GM18951 (cell line): ENCODE measurements at regions of chr15 and their contacts with region 1.

Region 1: DNA sequence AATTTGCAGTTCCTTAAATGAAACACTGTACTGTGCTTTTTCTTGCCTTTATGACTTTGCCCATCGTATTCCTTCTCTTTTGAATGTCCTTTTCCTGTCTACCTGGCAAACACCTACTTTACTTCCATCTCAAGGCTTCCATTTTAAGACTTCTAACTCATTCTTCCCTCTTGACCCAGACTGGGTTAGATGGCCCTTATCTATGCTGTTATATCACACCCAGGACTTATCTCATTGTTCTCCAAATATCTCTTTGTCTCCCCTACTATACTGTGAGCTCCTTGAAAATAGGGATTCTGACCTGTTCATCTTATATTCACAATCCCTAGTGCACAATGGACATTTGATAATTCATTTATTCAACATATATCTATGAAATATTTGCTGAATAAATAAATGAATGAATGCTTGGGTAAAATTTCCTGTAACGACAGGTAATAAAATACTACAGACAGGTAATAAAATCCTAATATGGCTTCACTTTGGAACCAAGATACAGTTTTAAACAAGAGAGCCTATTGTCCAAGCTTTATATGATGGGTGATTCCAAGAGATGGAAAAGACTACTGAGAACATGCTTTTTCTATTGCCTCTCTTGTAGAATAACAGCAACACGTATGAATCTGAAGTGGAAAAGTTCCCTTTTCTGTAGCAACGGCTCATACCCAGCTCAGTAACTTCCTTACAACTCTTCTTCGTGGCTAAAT is 22.7 kb downstream of the EFL1 start:
- POLR2A ChIP-seq: no peak

Region 2: GRCh38 chr15:83582381-83582780 is 1342.5 kb after region 1 on chr15:
- in situ Hi-C with region 1: no loop called
- POLR2A ChIP-seq: no peak

Region 3: GRCh38 chr15:84099181-84099580 is 1859.3 kb after region 1 on chr15:
- in situ Hi-C with region 1: loop called (anchors 10 kb)
- POLR2A ChIP-seq: no peak